Common myeloid progenitor, CD34-positive (primary cell): ENCODE measurements at regions of chr6 and their contacts with region 1.

Region 1: GRCh38 chr6:116268589-116269293 is 11.0 kb downstream of the TSPYL1 start:
- DNase-seq: peak; percentile 80 to 83 (median 83)
- H3K4me3 ChIP-seq: no peak overlapping the region
- H3K27ac ChIP-seq: no peak overlapping the region
- H3K4me1 ChIP-seq: peaks cover 0 to 4% (median 2%) of the 10 kb centered on the region in 4 experiments
- H3K27me3 ChIP-seq: no peaks in the 10 kb centered on the region

Region 2: DNA sequence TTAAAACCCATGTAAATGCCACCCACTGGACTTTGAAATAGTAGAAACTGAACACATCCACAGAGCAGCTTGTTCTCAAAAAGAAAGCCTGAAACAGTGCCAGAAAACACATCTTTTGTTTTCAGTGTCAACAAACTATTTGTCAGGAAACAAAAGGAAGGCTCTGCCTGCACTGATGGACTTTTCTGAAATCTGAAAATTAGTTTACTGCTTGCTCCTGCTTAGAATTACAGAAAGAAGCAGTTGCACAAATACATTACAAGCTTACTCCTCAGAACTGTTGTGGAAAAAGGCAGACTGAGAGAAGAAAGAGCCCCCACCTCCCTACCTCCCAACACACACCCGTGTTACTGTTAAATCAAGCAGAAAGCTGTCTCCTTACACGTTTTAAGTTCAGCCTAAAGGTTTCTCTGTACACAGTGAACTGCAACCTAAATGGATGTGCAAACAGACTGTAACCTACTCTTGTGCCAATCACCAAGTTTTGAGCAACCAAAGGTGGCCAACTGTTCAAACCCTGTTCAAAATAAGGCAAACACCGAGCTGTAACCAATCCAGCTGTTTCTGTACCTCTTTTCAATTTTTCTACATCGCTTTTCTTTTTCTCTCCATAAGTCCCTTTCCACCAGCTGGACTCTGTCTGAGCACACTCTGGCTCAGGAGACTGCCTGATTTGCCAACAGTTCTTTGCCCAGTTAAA is 251.7 kb before region 1 on chr6:
- CTCF ChIA-PET with region 1: no interaction called
- POLR2A ChIA-PET with region 1: no interaction called
- DNase-seq: no peak
- H3K4me3 ChIP-seq: no peak overlapping the region
- H3K27ac ChIP-seq: no peak overlapping the region
- H3K4me1 ChIP-seq: no peaks in the 10 kb centered on the region
- H3K27me3 ChIP-seq: no peaks in the 10 kb centered on the region

Region 3: GRCh38 chr6:116279260-116280063 is 10.7 kb after region 1 on chr6 and contains the start of gene TSPYL1:
- CTCF ChIA-PET with region 1: interaction called, 53 read pairs
- POLR2A ChIA-PET with region 1: interaction called, 16 read pairs
- DNase-seq: peak; percentile 97 to 98 (median 98)
- H3K4me3 ChIP-seq: peak within 1 kb of the TSS; percentile 78 to 98 (median 91)
- H3K27ac ChIP-seq: peak within 1 kb of the TSS; percentile 99
- H3K4me1 ChIP-seq: peaks cover 31 to 59% (median 42%) of the 10 kb centered on the region in 4 experiments
- H3K27me3 ChIP-seq: no peaks in the 10 kb centered on the region

Region 4: DNA sequence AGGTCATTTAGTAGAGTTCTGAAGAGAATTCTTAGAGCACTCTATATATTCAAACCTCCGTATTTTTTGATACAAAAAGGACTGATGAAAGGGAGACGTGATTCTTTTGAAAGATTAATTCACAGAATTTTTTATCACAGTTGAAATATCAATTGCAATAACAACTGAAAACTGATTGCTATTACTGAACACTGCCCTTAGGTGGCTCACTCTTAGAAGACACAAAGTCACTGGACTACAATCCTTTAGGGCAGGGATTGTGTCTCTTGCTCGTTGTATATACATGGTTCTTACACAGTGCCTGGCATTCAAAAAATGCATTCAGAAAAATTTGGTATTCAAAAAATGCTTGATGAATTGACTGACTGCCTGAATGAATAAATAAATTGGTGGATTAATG is 175.4 kb after region 1 on chr6:
- CTCF ChIA-PET with region 1: interaction called, 18 read pairs
- POLR2A ChIA-PET with region 1: no interaction called
- DNase-seq: peak; percentile 32 to 61 (median 59)
- H3K4me3 ChIP-seq: no peak overlapping the region
- H3K27ac ChIP-seq: no peak overlapping the region
- H3K4me1 ChIP-seq: peaks cover 13 to 43% (median 24%) of the 10 kb centered on the region in 4 experiments
- H3K27me3 ChIP-seq: no peaks in the 10 kb centered on the region

Region 5: GRCh38 chr6:116561377-116562018 is 292.8 kb after region 1 on chr6:
- CTCF ChIA-PET with region 1: interaction called, 40 read pairs
- POLR2A ChIA-PET with region 1: no interaction called
- DNase-seq: peak; percentile 71 to 83 (median 74)
- H3K4me3 ChIP-seq: no peak overlapping the region
- H3K27ac ChIP-seq: no peak overlapping the region
- H3K4me1 ChIP-seq: peaks cover 0 to 11% (median 4%) of the 10 kb centered on the region in 4 experiments
- H3K27me3 ChIP-seq: peaks cover 0 to 2% (median 0%) of the 10 kb centered on the region in 5 experiments